GM10248 (cell line): ENCODE measurements at regions of chr18 and their contacts with region 1.

Region 1: GRCh38 chr18:839224-840022 is 27.4 kb upstream of the YES1 start:
- DNase-seq: peak; percentile 87
- CTCF ChIP-seq: peak; percentile 99

Region 2: DNA sequence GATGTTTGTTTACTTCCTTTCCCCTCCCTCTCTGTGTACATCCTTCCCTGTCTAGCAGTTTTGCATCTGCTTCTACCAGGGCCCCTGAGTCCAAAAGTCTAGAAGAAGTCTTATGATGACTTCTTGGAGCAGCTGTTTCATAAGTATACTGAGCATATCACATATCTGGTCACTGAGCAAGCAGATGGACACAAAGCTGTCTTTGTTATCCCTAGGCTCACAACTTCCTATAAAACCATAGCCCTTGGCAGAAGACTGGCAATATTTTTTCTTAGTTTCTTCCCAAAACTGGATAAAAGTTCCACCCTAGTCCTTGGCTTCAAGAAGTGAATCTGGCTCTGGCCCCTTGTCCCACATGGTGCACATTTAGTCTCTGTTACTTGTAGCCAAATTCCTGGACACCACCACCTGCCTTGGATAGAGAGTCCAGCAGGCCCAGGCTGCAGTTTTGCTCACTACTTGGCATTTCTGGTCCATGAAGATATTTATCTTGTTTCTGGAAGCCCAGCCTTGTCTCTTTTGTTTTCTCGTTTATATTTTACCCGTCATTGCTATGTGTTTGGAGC is 594.1 kb before region 1 on chr18:
- CTCF ChIA-PET with region 1: no interaction called
- POLR2A ChIA-PET with region 1: no interaction called
- DNase-seq: no peak
- CTCF ChIP-seq: no peak

Region 3: DNA sequence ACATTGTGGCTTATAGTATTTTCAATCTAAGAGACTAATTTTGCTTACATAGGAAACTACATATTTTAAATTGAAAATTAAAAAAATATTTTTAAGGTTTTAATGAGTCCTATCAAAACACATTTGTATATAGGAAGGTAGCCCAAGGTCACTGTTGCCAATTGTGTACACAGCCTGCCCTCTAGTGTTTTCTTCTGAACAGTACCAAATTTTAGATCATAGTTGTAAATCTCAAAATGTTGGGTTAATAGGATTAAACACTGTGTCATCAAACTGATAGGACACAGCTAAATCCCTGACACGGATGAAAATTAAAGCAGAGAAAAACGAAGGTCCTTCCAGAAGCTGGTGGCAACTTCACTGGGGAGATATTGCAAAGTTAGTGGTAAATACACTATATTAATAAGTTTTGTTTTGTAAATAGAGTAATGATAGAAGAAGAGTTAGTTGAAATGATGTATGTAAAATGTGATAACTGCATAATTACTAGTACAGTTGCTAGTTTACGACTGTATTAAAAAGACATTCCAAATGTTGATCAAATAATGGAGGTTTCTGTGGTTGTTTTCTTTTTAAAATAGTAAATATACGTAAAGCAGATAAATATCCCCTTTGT is 222.9 kb before region 1 on chr18:
- CTCF ChIA-PET with region 1: interaction called, 229 read pairs
- POLR2A ChIA-PET with region 1: no interaction called
- DNase-seq: peak; percentile 35
- CTCF ChIP-seq: peak; percentile 38

Region 4: DNA sequence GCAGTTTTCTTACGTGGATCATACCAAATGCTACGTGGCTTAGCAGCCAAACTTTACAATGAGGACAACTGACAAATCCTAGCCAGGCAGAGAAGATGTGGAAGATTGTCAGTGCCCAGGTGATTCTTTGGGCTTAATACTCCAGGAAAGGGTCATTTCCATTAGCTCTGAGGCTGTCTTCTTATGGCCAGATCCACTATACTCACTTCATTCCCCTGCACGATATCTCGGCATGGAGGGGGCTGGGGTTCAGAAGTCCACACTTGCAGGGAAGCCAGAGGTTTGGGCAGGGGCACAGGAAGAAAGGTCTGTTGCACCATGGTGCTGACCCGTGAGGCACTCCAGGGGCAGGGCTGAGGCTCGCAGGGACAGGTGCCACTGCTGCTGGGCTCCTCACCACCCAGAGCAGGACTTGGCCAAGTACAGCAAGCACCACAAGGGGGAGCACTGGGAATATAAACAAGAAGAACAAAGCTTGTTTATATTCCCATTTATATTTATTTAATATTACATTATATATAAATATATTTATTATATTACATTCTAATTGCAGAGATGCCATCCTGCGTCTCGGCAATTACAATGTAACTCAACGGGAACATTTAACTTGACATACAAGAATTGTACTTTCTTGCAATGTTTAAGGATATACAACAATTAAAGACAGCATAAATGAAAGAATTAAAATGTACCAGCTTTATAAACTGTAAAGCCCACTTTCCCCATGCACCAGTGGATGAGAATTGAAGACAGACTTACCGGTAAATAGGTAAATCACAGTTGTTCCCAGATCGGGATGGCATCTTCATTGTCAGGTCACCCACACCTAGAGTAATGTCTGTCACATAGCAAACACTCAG is 215.4 kb before region 1 on chr18:
- CTCF ChIA-PET with region 1: interaction called, 229 read pairs
- POLR2A ChIA-PET with region 1: no interaction called
- DNase-seq: peak; percentile 55
- CTCF ChIP-seq: peak; percentile 73

Region 5: DNA sequence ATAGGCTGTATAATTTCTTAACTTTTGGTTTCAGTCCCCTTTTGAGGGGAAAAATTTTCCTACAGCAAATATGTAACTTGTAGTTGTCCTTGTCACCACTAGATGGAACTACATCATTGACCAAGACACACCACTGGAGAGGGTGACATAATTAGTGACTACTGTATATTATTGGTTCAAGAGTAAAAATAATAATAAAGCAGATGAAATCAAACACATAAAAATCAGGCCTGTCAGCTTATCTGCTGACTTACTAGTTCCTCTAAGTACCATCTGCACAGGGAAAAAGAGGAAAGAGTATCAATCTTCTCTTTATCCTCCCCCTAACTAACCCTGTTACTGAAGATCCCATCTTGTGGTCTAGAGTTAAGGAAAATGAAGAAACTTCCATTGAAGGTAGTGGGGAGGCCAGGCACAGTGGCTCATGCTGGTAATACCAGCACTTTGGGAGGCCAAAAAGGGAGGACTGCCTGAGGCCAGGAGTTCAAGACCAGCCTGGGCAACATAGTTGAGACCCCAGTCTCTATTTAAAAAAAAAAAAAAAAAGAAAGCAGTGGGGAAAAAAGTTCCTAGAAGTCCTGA is 97.4 kb before region 1 on chr18:
- CTCF ChIA-PET with region 1: interaction called, 191 read pairs
- POLR2A ChIA-PET with region 1: no interaction called
- DNase-seq: peak; percentile 67
- CTCF ChIP-seq: peak; percentile 62

Region 6: DNA sequence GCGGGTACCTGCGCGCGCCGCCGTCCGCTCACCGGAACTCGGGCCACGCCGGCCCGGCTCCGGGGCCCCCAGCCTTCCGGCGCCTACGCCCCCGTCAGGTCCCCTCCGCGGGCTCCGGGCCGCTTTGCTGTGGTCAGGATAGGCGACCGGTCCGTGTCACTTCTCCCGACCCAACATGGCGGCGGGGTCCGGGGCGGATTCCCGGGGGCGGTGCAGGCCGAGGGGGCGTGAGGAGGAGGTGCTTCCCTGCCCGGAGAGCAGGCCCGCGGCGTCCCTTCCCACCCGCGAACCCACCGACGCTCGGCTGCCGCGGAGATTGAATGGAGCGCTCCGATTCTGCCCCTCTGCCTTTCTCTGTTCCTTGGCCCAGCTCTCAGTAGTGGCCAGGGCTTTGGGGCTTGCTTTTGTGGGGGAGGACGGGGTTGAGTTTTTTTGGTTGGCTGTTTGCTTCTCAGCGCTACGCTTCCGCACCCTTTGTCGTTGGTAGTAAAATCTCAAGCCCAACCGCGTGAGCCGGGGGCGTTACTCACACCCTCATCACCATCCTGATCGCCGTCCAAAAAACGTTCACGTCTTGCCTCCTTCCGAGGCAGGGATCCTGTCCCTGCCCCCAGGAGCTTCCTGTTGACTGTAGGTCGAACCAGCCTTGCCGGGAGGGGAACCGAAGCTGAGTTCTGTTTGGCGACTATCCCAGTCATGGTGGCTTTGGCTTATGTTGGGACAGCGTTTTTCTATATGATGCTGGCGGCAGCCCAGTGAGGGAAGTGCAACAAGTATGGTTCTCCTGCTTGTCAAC is 26.8 kb before region 1 on chr18:
- CTCF ChIA-PET with region 1: interaction called, 13 read pairs
- POLR2A ChIA-PET with region 1: no interaction called
- DNase-seq: peak; percentile 92
- CTCF ChIP-seq: no peak

Region 7: GRCh38 chr18:824179-824578 is 15.2 kb before region 1 on chr18:
- CTCF ChIA-PET with region 1: interaction called, 74 read pairs
- POLR2A ChIA-PET with region 1: no interaction called
- DNase-seq: no peak
- CTCF ChIP-seq: no peak

Region 8: DNA sequence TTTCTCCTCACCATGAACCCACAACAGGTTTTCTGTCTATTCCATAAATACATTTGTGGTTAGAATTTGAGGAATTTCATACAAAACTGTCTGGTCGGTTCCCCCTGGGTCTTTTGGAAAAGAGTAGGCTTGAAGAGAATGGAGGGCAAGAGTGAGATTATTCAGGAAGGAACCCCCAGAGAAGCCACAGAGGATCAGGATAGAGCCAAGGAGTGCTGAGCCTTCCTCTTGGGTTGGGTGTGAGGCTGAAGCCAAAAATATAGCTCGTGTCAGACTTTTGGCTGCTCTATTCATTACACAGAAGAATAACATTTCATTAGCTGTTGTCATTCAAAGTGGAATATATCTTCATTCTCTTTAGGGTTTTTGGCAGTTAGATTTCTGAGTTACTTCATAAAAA is 18.6 kb after region 1 on chr18:
- CTCF ChIA-PET with region 1: interaction called, 15 read pairs
- POLR2A ChIA-PET with region 1: no interaction called
- DNase-seq: no peak
- CTCF ChIP-seq: no peak

Region 9: DNA sequence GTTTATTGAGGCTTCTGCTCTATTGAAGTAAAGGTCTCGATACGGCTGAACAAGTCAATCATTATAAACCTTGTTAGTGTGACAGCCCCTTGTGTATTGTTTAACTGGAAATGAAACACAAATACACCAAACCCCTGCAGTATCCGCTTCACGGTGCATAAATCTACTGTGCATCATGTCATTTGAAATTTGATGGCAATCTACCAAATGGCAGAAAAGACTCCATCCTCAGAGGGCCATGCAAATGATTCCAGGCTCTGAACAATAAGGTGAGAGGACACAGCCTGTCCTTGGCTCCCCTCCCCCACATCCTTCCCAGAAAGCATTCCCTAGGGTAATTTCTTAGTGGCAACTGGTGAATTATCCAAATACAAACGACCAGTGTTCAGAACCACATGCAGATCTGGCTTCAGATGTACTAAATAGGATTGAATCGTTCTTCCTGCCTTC is 145.8 kb after region 1 on chr18:
- CTCF ChIA-PET with region 1: no interaction called
- POLR2A ChIA-PET with region 1: no interaction called
- DNase-seq: no peak
- CTCF ChIP-seq: no peak